H1 (cell line): ENCODE measurements at regions of chr9 and their contacts with region 1.

Region 1: GRCh38 chr9:100111235-100111634 is 12.2 kb downstream of the INVS start:
- DNase-seq: no peak
- H3K4me3 ChIP-seq: no peak overlapping the region
- H3K27ac ChIP-seq: no peak overlapping the region
- H3K4me1 ChIP-seq: peaks cover 0 to 4% (median under 1%) of the 10 kb centered on the region in 4 experiments; a peak in 2 of 7 replicates
- H3K27me3 ChIP-seq: no peaks in the 10 kb centered on the region
- CTCF ChIP-seq: no peak
- EP300 ChIP-seq: no peak
- POLR2A ChIP-seq: no peak
- RAD21 ChIP-seq: no peak

Region 2: GRCh38 chr9:100098887-100099721 is 12.1 kb before region 1 on chr9 and contains the starts of genes ERP44 and INVS:
- CTCF ChIA-PET with region 1: interaction called, 10 read pairs
- POLR2A ChIA-PET with region 1: interaction called, 10 read pairs
- DNase-seq: peak; percentile 94 to 96
- H3K4me3 ChIP-seq: peak within 1 kb of the TSS; percentile 85 to 98 (median 97)
- H3K27ac ChIP-seq: peak within 1 kb of the TSS; percentile 46; the same call in 1 of the 2 replicates
- H3K4me1 ChIP-seq: peaks cover 0 to 5% (median 3%) of the 10 kb centered on the region in 4 experiments; a peak in 3 of 7 replicates
- H3K27me3 ChIP-seq: no peaks in the 10 kb centered on the region
- CTCF ChIP-seq: no peak
- EP300 ChIP-seq: no peak
- POLR2A ChIP-seq: peak; percentile 18 to 83
- RAD21 ChIP-seq: 0 out of 4 replicates have a peak, but pooled peaks of 1 of the 2 experiments have one; percentile 4
- total RNA-seq, gene ERP44: 14.1 and 15.6 TPM in 2 replicates
- total RNA-seq, gene INVS: 6.7 and 6.9 TPM in 2 replicates